CD4-positive, alpha-beta T cell (primary cell): ENCODE measurements at regions of chr14 and their contacts with region 1.

Region 1: DNA sequence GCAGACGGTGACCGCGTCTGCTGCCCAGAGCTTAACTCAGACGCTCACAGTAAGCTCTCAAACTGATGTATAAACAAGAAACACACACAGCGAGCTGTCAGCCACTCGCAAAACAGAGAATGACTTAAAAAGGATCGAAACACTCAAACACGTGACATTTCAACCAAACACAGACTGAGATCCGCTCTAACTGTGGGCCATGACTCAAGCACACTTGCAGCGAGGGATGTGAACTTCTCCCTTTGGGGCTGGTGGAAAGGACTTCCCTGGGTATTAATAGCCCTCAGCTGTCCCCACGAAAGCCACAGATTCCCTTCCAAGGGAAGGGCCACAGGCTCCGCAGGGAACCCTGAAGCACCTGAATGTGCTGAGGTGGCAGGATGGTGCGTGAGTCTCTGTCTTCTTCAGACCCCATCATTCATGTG is 29.1 kb downstream of the CCDC88C start:
- DNase-seq: peak in 10 of 14 experiments; percentile 32 to 82 (median 48)
- ATAC-seq: peak; percentile 81
- H3K4me3 ChIP-seq: peak overlapping the region; percentile 17
- H3K4me3 Mint-ChIP-seq: peak overlapping the region; percentile 72
- H3K27ac ChIP-seq: peak overlapping the region; percentile 44 to 50
- H3K27ac Mint-ChIP-seq: peak overlapping the region; percentile 88
- H3K4me1 ChIP-seq: peaks cover 100% of the 10 kb centered on the region
- H3K4me1 Mint-ChIP-seq: peaks cover 92% of the 10 kb centered on the region
- H3K27me3 ChIP-seq: no peaks in the 10 kb centered on the region
- H3K27me3 Mint-ChIP-seq: no peaks in the 10 kb centered on the region
- CTCF ChIP-seq: no peak

Region 2: DNA sequence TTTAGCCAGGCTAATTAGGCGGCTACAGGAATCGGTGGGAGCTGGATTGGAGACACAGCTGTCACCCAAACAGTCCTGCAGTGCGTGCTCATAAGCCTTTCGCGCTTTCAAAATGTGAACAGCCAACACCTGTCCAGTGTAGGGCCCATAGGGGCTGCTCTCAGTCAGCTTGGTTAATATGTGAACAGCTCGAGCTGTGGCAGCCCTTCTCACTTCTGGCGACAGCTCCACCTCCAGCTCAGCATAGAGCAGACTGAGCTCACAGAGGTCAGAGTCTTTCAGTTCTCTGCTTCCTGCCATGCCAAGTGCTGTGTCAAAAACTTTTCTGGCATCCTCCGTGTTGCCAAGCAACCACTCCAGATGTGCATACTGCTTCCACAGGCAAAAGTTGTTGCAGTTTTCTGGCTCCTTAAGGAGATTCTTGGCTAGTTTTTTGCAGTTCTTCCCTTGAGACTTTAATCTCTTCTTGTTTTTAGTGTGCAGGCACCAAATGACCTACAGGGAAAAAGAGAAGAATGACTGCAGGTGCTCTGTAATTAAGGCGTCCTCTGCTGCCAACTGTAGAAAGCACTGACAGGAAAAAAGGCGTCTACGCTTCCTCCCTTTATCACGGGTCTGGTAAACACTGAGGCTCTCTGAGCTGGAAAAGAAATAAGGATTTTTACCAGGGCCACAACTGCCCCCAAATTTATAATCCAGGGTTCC is 1099.8 kb before region 1 on chr14:
- CTCF ChIA-PET with region 1: no interaction called
- POLR2A ChIA-PET with region 1: no interaction called
- intact Hi-C with region 1: no loop called
- DNase-seq: no peak
- ATAC-seq: no peak
- H3K4me3 ChIP-seq: no peak overlapping the region
- H3K4me3 Mint-ChIP-seq: no peak overlapping the region
- H3K27ac ChIP-seq: no peak overlapping the region
- H3K27ac Mint-ChIP-seq: no peak overlapping the region
- H3K4me1 ChIP-seq: no peaks in the 10 kb centered on the region
- H3K4me1 Mint-ChIP-seq: no peaks in the 10 kb centered on the region
- H3K27me3 ChIP-seq: no peaks in the 10 kb centered on the region
- H3K27me3 Mint-ChIP-seq: no peaks in the 10 kb centered on the region
- CTCF ChIP-seq: no peak

Region 3: GRCh38 chr14:91402771-91403600 is 14.4 kb after region 1 on chr14:
- CTCF ChIA-PET with region 1: interaction called, 5 read pairs
- POLR2A ChIA-PET with region 1: interaction called, 6 read pairs
- intact Hi-C with region 1: loop called in 1 of 2 experiments (anchors 2 kb)
- DNase-seq: peak in 1 of 14 experiments; percentile 27
- ATAC-seq: no peak
- H3K4me3 ChIP-seq: peak overlapping the region; percentile 17
- H3K4me3 Mint-ChIP-seq: peak overlapping the region; percentile 81
- H3K27ac ChIP-seq: peak overlapping the region; percentile 70 to 85
- H3K27ac Mint-ChIP-seq: peak overlapping the region; percentile 98
- H3K4me1 ChIP-seq: peaks cover 98% of the 10 kb centered on the region
- H3K4me1 Mint-ChIP-seq: peaks cover 90% of the 10 kb centered on the region
- H3K27me3 ChIP-seq: no peaks in the 10 kb centered on the region
- H3K27me3 Mint-ChIP-seq: no peaks in the 10 kb centered on the region
- CTCF ChIP-seq: no peak

Region 4: DNA sequence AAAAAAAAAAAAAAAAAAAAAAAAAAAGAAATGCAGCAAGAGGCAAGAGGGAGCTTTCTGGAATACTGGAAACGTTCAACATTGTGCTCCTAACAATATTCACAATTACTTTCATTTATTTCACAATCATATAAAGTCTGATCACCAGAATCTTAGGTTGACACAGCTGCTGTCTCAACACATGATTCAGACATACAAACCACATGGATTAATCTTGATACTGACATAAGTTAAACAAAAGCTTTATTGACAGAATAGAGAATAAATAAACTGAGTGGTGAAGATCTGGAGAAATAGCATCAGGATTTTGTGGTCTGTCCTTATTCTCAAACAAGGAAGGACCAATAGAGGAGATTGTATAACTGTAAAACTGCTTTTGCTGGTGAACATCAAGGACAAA is 264.1 kb after region 1 on chr14:
- CTCF ChIA-PET with region 1: no interaction called
- POLR2A ChIA-PET with region 1: no interaction called
- intact Hi-C with region 1: no loop called
- DNase-seq: no peak
- ATAC-seq: no peak
- H3K4me3 ChIP-seq: no peak overlapping the region
- H3K4me3 Mint-ChIP-seq: no peak overlapping the region
- H3K27ac ChIP-seq: no peak overlapping the region
- H3K27ac Mint-ChIP-seq: no peak overlapping the region
- H3K4me1 ChIP-seq: no peaks in the 10 kb centered on the region
- H3K4me1 Mint-ChIP-seq: no peaks in the 10 kb centered on the region
- H3K27me3 ChIP-seq: no peaks in the 10 kb centered on the region
- H3K27me3 Mint-ChIP-seq: no peaks in the 10 kb centered on the region
- CTCF ChIP-seq: no peak